Activated B cell treated with CpG ODN at 0.5 μM for 24 hours (primary cell): ENCODE measurements at regions of chr16 and their contacts with region 1.

Region 1: GRCh38 chr16:65117811-65118448 is 3.9 kb downstream of the CDH11 start:
- DNase-seq: no peak
- ATAC-seq: peak; percentile 31
- H3K4me3 Mint-ChIP-seq: no peak overlapping the region
- H3K27ac Mint-ChIP-seq: no peak overlapping the region
- H3K4me1 Mint-ChIP-seq: no peaks in the 10 kb centered on the region
- H3K27me3 Mint-ChIP-seq: peaks cover 18% of the 10 kb centered on the region
- CTCF ChIP-seq: no peak

Region 2: DNA sequence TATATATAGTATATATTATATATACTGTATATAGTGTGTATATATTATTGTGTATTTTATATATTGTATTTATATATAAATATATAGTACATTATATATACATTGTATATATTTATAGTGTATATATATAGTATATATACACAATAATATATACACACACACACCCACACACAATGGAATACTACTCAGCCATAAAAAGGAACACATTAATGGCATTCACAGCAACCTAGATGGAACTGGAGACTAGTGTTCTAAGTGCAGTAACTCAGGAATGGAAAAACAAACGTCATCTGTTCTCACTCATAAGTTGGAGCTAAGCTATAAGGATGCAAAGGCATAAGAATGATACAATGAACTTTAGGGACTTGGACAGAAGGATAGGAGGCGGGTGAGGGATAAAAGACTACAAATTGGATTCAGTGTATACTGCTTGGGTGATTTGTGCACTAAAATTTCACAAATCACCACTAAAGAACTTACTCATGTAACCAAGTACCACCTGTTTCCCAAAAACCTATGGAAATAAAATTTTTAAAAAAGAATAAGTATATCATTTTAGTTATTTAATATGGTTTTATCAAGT is 205.8 kb after region 1 on chr16:
- CTCF ChIA-PET with region 1: no interaction called
- POLR2A ChIA-PET with region 1: no interaction called
- intact Hi-C with region 1: loop called (anchors 5 kb)
- DNase-seq: no peak
- ATAC-seq: no peak
- H3K4me3 Mint-ChIP-seq: no peak overlapping the region
- H3K27ac Mint-ChIP-seq: no peak overlapping the region
- H3K4me1 Mint-ChIP-seq: no peaks in the 10 kb centered on the region
- H3K27me3 Mint-ChIP-seq: no peaks in the 10 kb centered on the region
- CTCF ChIP-seq: no peak